ENCODE measurements at regions of chr9 and their contacts with region 1.

Region 1: DNA sequence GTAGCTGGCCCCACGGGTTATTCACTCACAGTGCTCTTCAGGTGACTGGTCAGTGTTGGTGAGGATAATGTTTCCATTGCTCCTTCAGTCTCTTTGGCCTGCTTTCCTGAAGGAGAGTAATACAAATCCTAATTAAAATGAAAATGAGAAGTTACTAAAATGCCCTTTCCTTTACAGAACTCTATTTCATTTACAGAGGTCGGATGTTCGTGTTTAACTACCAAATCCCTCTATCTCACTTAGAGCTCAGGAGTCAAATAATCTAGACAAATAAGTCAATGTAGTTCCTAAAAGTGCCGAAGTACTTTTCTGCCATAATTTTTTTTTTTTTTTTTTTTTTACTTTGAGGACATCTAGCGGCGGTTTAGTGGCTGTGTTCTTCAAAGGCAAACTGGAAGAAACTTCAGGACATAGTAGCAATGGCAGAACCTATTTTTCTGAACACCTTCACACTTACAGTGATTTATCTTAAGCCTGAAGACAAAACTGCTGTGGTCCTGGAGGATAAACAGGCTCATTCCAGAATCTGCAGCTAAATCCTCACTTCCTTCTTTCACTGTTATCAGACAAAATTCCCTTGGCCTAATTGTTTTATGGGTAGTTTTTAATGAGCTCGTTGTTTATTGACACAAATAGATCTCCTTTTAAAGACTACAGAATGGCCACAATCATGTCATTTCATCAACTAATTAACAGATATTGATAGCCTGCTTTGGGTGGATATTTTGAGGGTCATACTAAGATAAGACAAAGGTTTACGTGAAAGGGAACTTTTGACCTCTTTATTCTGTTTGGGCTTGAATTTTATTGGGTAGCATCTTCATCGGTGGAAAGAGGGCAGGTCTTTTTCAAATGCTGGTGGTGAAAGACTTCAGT is 207.6 kb upstream of the DMRTA1 start:
- DNase-seq: no peak
- ATAC-seq: peak in 1 of 4 donors; percentile 53
- H3K4me3 ChIP-seq: no peak overlapping the region
- H3K27ac ChIP-seq: no peak overlapping the region
- H3K4me1 ChIP-seq: peaks cover 0 to 6% (median 0%) of the 10 kb centered on the region in 12 donors
- H3K27me3 ChIP-seq: no peaks in the 10 kb centered on the region
- CTCF ChIP-seq: peak in 11 of 12 donors; percentile 28 to 56 (median 49)
- POLR2A ChIP-seq: no peak

Region 2: DNA sequence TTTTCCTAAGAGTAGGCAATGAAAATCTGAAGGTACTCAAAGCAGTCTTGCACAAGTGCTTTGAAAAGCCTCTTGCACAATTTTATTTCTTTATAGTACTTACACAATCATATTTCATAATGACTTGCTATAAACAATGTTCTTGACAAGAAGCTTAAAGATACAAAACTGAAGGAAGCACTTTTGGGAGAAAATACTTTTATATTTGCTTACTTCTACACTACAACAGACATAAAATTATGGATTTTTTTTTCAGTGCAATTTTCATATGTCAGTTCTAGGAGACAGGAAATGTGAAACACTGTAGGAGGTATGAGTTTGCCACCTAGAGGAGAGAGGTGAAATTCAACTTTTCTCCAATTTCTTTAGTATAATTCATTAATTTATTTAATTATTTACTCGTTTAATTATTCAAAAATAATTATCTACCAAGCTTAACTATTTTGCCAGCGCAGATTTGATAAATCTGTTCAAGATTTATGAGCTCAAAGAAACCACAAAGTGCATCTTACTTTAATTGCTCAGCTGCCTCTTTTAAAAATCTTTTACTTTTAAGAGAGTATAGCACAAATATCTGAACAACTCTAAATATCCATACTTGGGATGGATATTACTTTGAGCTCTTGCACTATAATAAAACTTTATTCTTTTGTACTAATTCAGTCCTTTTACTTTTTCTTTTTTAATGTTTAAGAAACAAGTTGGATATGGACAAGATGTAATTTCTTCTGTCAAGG is 200.9 kb before region 1 on chr9:
- intact Hi-C with region 1: loop called in 3 of 10 experiments (anchors 10 kb)
- DNase-seq: no peak
- ATAC-seq: no peak
- H3K4me3 ChIP-seq: no peak overlapping the region
- H3K27ac ChIP-seq: no peak overlapping the region
- H3K4me1 ChIP-seq: peaks cover 0 to 10% (median 0%) of the 10 kb centered on the region in 12 donors
- H3K27me3 ChIP-seq: no peaks in the 10 kb centered on the region
- CTCF ChIP-seq: peak; percentile 23 to 66 (median 51)
- POLR2A ChIP-seq: no peak

Region 3: GRCh38 chr9:22052376-22052945 is 186.6 kb before region 1 on chr9:
- intact Hi-C with region 1: loop called in 2 of 10 experiments (anchors 5 to 10 kb)
- DNase-seq: no peak
- ATAC-seq: no peak
- H3K4me3 ChIP-seq: no peak overlapping the region
- H3K27ac ChIP-seq: no peak overlapping the region
- H3K4me1 ChIP-seq: peaks cover 0 to 25% (median 0%) of the 10 kb centered on the region in 12 donors
- H3K27me3 ChIP-seq: no peaks in the 10 kb centered on the region
- CTCF ChIP-seq: no peak
- POLR2A ChIP-seq: no peak

Region 4: DNA sequence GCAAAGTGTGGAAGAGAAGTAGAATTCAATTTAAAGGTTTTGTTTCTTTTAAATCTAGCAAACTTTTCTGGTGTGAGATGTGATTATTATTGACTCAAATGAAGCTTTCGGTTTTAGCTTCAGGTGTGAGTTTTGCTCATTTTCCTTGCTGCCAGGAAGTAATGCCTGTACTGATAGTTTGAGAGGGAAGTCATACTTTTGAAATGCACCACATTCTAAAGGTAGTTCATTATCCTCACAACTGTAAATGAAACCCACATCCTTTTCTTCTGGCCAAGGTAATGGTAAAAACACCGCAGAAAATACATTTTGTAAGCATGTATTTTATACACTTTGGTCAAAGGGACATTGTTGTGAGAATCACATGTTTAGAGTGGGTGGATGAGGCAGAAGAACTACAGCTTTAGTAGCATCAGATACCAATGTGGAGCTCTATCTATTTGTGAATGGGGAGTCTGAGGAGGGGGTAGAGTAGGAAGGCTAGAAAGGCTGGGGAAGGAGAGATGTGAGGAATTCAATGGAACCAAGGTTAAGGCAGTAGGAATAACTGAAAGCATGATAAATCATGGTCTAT is 63.0 kb before region 1 on chr9:
- intact Hi-C with region 1: no loop called
- DNase-seq: no peak
- ATAC-seq: no peak
- H3K4me3 ChIP-seq: no peak overlapping the region
- H3K27ac ChIP-seq: no peak overlapping the region
- H3K4me1 ChIP-seq: peaks cover 0 to 4% (median 0%) of the 10 kb centered on the region in 12 donors
- H3K27me3 ChIP-seq: no peaks in the 10 kb centered on the region
- CTCF ChIP-seq: no peak
- POLR2A ChIP-seq: no peak

Region 5: DNA sequence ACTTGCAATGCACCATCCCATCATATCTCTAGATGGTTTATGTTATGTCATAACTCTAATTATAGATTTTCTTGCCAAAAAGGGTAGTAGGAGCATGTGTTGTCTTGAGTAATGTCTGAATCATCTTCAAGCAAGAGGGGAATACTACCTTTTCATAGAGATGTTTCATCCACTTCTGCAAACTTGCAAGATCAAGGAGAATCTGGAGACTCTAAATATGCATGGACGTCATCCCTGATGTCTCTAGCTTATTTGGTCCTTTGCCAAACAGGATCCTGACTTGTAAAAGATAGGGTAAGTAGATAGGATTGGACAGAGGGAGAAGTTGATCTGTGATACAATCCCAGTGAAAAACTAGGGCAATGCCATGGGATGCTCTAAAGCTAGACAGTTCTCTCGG is 454.1 kb after region 1 on chr9:
- intact Hi-C with region 1: no loop called
- DNase-seq: no peak
- ATAC-seq: no peak
- H3K4me3 ChIP-seq: no peak overlapping the region
- H3K27ac ChIP-seq: no peak overlapping the region
- H3K4me1 ChIP-seq: no peaks in the 10 kb centered on the region
- H3K27me3 ChIP-seq: no peaks in the 10 kb centered on the region
- CTCF ChIP-seq: no peak
- POLR2A ChIP-seq: no peak